ENCODE measurements at regions of chr10 and their contacts with region 1.

Region 1: DNA sequence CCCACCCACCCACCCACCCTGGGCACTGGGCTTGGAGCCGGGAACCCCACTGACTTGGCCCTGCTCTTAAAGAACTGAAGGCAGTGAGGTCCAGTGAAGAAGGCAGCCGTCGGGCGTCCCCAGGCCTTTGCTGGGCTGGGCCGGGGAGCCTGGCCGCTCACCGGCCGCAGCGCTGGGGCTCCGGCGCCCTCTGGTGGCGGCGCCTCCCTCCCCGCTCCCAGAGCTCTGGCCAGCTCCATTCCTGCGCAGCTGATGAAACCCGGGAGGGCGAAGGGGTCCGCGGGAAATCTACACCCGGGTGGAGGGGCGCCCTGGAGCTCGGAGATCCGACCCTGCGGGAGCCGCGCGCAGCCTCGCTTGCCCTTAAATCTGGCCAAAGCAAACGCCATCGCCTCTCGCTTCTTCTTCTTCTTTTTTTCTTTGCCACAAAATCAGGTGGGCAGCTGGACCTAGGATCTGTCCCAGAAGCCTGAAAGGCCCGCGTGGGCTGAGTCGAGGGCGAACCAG is 1.7 kb upstream of the CXCL12 start:
- DNase-seq: peak; percentile 87
- ATAC-seq: peak; percentile 78

Region 2: GRCh38 chr10:43683451-43684291 is 702.9 kb before region 1 on chr10:
- intact Hi-C with region 1: loop called (anchors 5 kb)
- DNase-seq: no peak
- ATAC-seq: peak; percentile 15

Region 3: DNA sequence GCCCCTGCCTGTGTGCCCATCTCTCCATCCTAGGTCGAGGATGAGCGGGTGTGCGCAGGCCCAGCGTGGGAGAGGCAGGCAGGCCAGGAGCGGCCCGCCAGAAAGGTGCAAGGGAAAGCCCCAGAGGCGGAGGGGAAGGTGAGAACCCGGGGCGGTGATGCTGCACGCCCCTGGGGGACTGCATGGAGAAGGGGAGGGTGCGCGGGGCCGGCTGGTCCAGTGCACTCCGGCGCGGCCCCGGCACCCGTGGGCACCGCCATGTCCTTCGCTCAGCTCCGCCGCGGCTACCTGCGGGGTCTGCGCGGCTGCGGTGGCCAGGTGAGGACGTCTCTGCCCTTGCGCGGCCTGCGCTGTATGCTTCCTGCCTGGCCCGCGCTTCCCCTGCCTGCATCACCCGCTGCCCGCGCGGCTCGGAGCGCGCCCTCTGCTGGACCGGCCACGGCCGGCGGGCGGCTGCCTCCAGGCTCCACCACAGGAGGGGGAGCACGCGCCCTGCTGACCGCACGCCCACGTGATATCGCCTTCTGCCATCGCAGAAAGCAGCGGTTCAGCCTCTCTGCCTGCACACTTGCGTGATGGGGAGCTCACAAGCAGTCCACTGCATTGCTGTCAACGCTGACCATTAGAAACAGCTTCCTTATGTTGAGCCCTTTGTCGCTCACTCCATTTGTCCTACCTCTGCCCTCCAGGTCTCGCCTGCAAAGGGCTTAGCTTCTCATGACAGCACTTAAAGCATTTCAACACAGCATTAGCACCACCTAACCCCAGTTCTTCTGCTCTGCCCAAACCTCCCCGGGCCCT is 75.6 kb before region 1 on chr10:
- intact Hi-C with region 1: loop called (anchors 10 kb)
- DNase-seq: peak; percentile 95
- ATAC-seq: peak; percentile 99